GM12878 (cell line): ENCODE measurements at regions of chr17 and their contacts with region 1.

Region 1: DNA sequence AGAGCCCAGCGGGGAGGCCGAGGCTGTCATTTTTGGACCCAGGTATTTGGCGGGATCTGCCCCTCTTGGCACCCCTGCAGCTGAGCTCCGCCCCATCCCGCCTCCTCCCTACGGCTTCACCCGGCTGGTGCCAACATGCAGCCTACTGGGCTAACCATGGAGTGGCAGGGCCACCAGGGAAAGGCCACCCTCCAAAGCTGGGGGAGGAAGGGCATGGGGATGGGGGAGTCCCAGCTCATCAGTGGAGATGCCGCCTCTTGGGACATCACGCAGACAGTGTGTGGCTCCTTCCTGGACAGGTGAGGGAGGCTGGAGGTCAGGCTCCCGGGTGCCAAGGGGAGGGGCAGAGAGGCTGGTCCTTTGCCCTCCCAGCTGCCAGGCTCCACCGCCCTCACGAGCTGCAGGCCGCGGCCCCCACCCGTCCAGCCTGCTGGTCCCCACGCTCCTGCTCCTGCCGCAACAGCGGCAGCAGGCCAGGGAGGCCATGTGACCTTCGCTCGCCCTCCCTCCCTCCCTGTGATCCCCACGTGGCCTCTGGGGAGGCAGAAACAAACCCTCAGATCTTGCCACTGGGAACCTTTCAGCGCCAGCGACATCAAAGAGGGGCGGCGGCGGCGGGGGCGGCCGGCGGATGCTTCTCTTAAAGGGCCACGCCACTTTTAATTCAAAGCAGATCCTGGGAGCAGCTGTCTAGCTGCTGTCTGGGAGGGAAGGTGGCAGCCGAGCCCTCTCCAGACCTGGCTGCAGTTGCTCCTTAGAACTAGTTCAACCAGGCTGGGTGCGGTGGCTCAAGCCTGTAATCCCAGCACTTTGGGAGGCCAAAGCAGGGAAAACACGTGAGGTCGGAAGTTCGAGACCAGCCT is 6.8 kb upstream of the NOTUM start:
- DNase-seq: peak; percentile 40
- ATAC-seq: peak; percentile 98
- H3K4me3 ChIP-seq: no peak overlapping the region
- H3K27ac ChIP-seq: no peak overlapping the region
- H3K4me1 ChIP-seq: peaks cover 18% of the 10 kb centered on the region
- H3K27me3 ChIP-seq: peaks cover 1 to 5% of the 10 kb centered on the region in 2 experiments; a peak in 3 of 4 replicates
- CTCF ChIP-seq: no peak
- EP300 ChIP-seq: no peak
- POLR2A ChIP-seq: peak; percentile 76
- RAD21 ChIP-seq: no peak

Region 2: DNA sequence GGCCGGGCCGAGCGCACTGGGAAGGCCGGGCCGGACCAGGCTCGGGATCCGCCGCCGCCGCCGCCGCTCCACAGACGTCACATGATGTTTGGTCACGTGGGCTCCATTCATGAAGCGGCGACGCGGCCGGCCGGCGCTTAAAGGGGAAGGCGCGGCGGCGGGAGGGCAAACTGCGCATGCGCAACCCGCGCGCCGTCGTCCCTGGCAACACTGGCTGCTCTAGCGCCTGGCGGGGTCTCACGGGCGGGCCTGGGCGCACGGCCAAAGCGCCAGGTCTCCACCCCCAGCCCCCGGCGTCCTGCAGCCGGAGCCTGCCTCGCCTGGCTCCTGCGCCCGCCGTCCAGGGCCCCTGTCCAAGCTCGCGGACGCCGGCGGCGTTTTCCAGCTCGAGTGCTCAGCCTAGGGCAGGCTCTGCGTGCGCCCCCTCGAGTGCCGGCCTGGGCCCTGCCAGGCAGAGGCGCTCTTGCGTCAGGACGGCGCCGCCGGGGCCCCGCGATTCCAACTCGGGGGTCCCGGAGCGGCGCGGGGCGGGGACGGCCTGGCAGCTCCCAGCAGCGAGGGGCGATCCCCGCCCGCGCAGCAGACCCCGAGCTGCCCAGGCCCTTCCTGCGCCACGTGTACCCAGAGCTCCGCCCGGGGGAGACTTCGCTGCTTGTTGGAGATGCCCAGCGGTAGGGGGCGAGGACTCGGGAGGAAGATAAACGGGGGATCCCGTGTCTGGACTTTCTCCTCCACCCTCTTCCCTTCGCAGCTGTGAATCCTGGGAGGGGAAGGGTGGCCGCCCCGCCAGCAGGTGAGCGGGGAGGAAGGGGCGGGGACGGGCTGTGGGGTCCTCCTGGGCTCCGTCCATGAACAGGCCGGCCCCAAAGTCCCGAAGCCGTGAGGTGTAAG is 39.9 kb before region 1 on chr17 and contains the start of gene MAFG:
- CTCF ChIA-PET with region 1: interaction called, 6 read pairs
- POLR2A ChIA-PET with region 1: interaction called, 3 read pairs
- RAD21 ChIA-PET with region 1: interaction called, 4 read pairs
- SMC1A ChIA-PET with region 1: no interaction called
- in situ Hi-C with region 1: no loop called
- intact Hi-C with region 1: loop called (anchors 5 kb)
- DNase-seq: peak; percentile 48
- ATAC-seq: peak; percentile 75
- H3K4me3 ChIP-seq: peak within 1 kb of the TSS; percentile 83
- H3K27ac ChIP-seq: peak within 1 kb of the TSS; percentile 71
- H3K4me1 ChIP-seq: peaks cover 27% of the 10 kb centered on the region
- H3K27me3 ChIP-seq: no peaks in the 10 kb centered on the region
- CTCF ChIP-seq: peak; percentile 33 to 44 (median 42); a peak in 5 of 6 replicates
- EP300 ChIP-seq: 0 out of 4 replicates have a peak, but pooled peaks of 1 of the 2 experiments have one; percentile 11
- POLR2A ChIP-seq: no peak
- RAD21 ChIP-seq: 0 out of 2 replicates have a peak, but pooled peaks have one; percentile 3
- polyA plus RNA-seq, gene MAFG: 0.48 to 1.3 TPM

Region 3: GRCh38 chr17:82188001-82188961 is 220.5 kb after region 1 on chr17:
- CTCF ChIA-PET with region 1: no interaction called
- POLR2A ChIA-PET with region 1: no interaction called
- RAD21 ChIA-PET with region 1: no interaction called
- SMC1A ChIA-PET with region 1: no interaction called
- in situ Hi-C with region 1: no loop called
- intact Hi-C with region 1: no loop called
- DNase-seq: no peak
- ATAC-seq: no peak
- H3K4me3 ChIP-seq: no peak overlapping the region
- H3K27ac ChIP-seq: no peak overlapping the region
- H3K4me1 ChIP-seq: no peaks in the 10 kb centered on the region
- H3K27me3 ChIP-seq: no peaks in the 10 kb centered on the region
- CTCF ChIP-seq: no peak
- EP300 ChIP-seq: no peak
- POLR2A ChIP-seq: no peak
- RAD21 ChIP-seq: no peak

Region 4: DNA sequence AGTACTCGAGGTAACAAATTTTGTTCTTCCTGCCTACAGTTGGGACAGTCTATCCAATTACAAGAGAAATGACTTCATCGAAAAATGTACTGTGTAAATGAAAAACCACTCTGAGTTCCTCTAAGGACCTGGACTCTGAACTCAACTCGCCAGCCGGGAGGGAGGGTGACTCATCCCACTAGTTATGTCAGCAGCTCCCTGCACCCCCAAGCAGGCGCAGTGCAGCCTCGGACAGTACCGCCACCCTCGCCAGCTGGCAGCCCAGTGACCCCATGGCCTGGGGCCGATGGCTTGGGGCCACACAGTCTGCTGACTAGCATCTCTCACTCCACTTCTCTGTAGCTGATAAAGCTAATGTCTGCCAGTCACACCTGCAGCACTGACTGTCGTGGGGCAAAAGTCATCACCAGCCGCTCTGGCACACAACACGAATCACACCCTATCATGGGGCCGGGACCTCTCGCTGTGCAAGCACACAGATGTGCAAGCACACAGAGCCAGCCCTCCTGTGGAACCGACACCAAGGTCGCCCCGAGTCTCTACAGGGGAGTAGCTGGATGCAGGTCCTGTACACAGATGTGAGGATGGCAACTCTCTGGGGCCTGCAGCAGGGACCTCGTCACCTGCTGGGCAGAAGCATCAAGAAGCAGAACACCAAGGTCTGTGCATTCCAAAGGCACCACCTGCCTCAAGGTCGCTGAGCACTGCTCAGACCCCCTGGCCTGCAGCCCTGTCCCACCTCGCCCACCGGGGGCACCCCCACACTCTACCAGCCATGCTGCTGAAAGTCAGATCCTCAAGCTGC is 300.0 kb after region 1 on chr17:
- CTCF ChIA-PET with region 1: no interaction called
- POLR2A ChIA-PET with region 1: no interaction called
- RAD21 ChIA-PET with region 1: no interaction called
- SMC1A ChIA-PET with region 1: no interaction called
- in situ Hi-C with region 1: no loop called
- intact Hi-C with region 1: no loop called
- DNase-seq: no peak
- ATAC-seq: peak; percentile 63
- H3K4me3 ChIP-seq: no peak overlapping the region
- H3K27ac ChIP-seq: no peak overlapping the region
- H3K4me1 ChIP-seq: peaks cover 12% of the 10 kb centered on the region
- H3K27me3 ChIP-seq: no peaks in the 10 kb centered on the region
- CTCF ChIP-seq: no peak
- EP300 ChIP-seq: no peak
- POLR2A ChIP-seq: peak; percentile 43; the same call in 1 of the 2 replicates
- RAD21 ChIP-seq: no peak